Cardiac septum (tissue), 1 donor: ENCODE measurements at regions of chr7 and their contacts with region 1.

Region 1: GRCh38 chr7:35037526-35038339 is 448 bp upstream of the DPY19L1 start:
- DNase-seq: peak; percentile 95

Region 2: DNA sequence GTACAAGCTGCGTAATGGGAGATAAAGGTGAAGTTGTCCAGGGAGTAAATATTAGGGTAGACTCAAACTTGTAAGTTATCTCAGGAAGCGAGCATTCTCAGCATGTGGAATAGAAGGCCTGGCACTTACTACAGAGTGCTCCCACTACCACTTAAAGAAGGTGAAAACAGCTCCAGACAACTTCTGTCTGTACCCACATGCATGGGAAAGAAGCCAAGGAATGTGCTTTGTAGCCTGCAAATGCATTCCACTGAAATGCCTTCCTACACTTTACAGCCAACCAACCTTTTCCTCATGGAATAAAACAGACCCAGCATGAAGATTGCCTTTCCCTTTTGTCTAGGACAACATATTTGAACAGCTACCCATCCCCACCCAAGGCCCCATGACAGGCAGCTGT is 425.1 kb before region 1 on chr7:
- intact Hi-C with region 1: loop called (anchors 10 kb)
- DNase-seq: no peak

Region 3: DNA sequence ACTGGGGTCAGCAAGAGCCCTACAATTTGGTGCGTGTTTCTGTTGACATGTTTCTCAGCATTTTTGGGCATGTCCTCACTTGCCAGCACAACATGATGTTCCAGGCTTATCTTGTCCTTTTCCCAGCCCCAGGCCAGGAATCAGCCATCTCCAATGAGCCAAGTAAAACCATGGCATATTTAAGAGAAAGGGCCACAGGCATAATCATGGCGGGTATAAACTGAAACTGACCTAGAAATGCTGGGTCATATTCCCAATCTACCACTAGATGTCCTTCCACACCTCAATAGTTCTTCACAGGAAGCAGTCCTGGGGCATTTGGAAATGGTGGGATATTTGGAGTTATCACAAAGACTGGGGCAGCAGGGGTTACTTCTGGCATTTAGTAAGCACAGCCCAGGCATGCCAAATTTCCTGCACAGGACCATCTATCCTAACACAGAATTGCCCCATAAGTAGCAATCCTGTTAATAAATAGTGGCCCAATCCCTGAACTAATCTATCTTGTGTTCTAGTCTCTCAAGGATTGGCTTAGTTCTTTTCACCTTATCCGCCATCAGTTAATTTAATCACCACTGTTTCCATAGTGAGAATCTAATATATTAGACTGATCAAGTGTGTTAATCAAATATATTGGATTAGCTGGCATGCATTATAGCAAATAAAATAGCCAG is 278.1 kb before region 1 on chr7:
- intact Hi-C with region 1: loop called (anchors 10 kb)
- DNase-seq: no peak

Region 4: DNA sequence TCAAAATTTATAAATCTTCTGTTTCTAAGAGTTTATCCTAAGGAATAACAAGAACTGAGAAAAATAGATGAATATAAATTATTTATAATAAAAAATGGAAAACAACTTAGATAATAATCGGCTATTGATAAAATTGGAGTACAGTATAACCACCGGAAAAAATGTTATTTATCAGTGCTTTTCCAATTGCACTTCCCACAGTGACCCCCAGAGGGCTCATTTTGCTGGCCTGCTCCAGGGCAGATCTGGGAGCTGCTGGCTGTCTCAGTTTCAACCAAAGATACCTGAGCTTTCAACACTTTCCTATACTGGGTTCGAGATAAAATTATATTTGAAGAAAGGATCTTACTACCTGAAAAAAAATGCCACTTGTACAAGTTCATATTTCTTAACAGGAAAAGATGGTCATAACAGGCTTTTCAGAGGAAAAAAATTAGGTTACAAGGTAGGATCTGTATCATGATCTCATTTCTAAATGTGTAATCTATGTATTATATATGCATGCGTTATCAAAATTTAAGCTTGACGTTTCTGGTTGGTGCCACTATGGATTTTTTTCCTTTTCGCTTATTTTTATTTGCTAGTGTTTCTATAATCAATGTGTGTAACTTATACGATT is 214.0 kb before region 1 on chr7:
- intact Hi-C with region 1: loop called (anchors 2 kb)
- DNase-seq: no peak

Region 5: DNA sequence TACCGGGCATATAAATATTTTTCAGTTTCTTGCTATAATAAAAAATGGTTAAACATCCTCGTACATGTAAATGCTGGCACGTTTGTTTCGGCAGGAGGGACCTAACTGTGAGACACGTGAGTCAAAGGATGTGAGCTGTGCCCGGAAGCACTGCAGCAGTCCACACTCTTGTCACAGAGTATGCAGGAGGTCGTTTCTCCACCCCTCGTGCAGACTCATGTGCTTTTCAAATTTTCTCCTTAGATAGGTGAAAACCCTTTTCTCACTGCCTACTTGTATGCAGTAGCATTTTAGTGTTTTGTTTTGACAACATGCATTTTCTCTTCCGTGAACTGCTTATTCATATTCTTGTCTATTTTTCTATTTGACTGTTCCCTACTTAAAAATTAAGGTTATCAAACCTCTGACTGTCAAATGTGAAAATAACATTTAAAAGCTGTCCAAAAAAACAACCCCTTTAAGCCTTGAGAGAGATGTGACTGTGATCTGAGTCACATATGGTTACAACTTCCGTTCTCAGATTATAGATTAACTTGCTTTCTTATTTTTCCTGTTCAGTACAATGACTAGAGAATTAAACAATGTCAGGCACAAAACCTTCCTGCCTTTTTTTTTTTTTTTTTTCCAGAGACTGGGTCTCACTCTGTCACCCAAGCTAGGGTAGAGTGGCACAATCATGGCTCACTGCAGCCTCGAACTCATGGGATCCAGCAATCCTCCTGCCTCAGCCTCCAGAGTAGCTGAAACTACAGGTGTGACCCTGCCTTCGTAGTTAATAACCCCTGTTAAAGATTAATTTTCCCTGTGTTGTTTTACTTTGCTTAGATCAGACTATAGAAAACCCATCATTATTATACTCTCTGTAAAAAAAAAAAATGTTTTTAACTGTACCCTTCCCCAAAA is 45.5 kb before region 1 on chr7:
- intact Hi-C with region 1: no loop called
- DNase-seq: no peak

Region 6: DNA sequence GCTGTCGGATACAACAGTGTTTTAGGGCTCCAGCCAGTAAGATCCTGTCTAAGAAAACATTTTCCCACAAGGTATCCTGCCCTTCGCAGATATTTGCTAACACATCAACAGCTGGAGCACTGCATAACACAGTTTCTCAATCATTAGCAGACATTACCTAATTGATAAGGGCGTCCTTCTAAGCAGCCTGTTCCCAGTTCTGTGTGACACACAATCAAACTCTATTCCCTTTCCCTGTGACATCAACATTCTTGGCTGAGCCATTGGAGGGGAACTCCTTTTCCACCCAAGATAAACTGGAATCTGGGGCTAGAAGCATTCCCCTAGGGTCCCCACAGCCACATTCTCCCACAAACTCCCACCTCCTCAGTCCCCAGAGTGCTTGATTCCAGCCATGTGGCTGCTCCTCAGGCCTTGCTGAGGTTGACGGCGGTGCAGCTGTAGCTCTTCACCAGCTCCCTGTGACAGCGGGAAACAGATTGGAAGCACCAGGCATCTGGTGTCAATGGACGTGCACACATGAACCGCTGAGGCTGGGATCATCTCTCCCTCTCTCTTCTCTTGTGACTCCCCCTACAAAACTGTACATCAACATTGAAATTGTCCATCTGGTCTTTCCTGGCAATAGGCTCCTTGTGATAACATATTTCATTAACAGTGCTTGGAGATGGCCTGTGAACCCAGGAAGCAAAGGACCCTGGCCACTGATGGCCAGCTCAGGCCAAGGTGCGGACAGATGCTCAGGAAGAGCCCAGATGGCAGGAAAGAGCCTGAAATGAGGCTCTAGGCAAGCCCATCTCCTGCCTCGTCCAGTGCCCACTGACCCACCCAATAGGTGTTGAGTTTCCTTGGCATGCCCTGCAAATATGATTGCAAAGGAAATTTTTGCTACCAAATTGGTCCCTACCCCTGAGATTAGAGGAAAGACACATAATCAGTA is 347.3 kb after region 1 on chr7:
- intact Hi-C with region 1: no loop called
- DNase-seq: no peak